ENCODE measurements at regions of chr5 and their contacts with region 1.

Region 1: DNA sequence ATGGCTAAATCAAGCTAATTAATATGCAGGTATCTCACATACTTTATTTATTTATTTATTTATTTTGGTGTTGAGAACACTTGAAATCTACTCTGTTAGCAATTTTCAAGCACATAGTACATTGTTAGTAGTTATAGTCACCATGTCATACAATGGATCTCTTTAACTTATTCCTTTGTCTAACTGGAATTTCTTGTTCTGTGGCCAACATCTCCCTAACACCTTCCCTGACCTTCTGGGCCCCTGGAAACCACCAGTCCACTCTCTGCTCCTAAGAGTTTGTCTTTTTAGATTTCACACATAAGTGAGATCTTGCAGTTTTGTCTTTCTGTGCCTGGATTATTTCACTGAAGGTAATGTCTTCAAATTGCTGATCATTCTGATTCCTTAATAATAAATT is 229.1 kb downstream of the SEMA5A start:
- DNase-seq: peak in 1 of 2 experiments; percentile 34
- H3K4me3 ChIP-seq: no peak overlapping the region
- H3K4me3 Mint-ChIP-seq: no peak overlapping the region
- H3K27ac Mint-ChIP-seq: peak overlapping the region; percentile 6
- H3K4me1 ChIP-seq: peaks cover 10% of the 10 kb centered on the region; the same call in 1 of the 2 replicates
- H3K4me1 Mint-ChIP-seq: peaks cover 15% of the 10 kb centered on the region
- H3K27me3 ChIP-seq: no peaks in the 10 kb centered on the region
- H3K27me3 Mint-ChIP-seq: no peaks in the 10 kb centered on the region
- CTCF ChIP-seq: no peak

Region 2: DNA sequence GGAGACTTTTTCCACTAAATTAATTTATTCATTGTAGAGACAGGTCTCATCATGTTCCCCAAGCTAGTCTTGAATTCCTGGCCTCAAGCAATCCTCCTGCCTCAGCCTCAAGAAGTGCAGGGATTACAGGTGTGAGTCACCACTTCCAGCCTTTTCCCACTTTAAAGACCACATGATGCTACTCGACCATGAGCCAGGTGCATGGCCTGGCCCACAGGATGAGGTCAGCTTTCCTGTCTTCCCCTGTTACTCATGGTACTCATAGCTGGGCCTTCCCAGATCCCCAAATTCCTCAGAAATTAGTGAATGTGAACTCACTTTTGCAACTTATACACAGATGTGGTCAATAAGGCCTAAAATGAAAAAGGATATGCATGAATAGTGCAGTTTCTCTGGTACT is 166.7 kb before region 1 on chr5:
- CTCF ChIA-PET with region 1: no interaction called
- POLR2A ChIA-PET with region 1: no interaction called
- intact Hi-C with region 1: no loop called
- DNase-seq: no peak
- H3K4me3 ChIP-seq: no peak overlapping the region
- H3K4me3 Mint-ChIP-seq: no peak overlapping the region
- H3K27ac Mint-ChIP-seq: no peak overlapping the region
- H3K4me1 ChIP-seq: no peaks in the 10 kb centered on the region
- H3K4me1 Mint-ChIP-seq: no peaks in the 10 kb centered on the region
- H3K27me3 ChIP-seq: no peaks in the 10 kb centered on the region
- H3K27me3 Mint-ChIP-seq: no peaks in the 10 kb centered on the region
- CTCF ChIP-seq: no peak

Region 3: GRCh38 chr5:9269014-9269413 is 47.7 kb before region 1 on chr5:
- CTCF ChIA-PET with region 1: no interaction called
- POLR2A ChIA-PET with region 1: no interaction called
- intact Hi-C with region 1: no loop called
- DNase-seq: no peak
- H3K4me3 ChIP-seq: no peak overlapping the region
- H3K4me3 Mint-ChIP-seq: no peak overlapping the region
- H3K27ac Mint-ChIP-seq: no peak overlapping the region
- H3K4me1 ChIP-seq: peaks cover 4% of the 10 kb centered on the region; the same call in 1 of the 2 replicates
- H3K4me1 Mint-ChIP-seq: peaks cover 8% of the 10 kb centered on the region
- H3K27me3 ChIP-seq: no peaks in the 10 kb centered on the region
- H3K27me3 Mint-ChIP-seq: no peaks in the 10 kb centered on the region
- CTCF ChIP-seq: no peak

Region 4: GRCh38 chr5:9348401-9348996 is 31.8 kb after region 1 on chr5:
- CTCF ChIA-PET with region 1: no interaction called
- POLR2A ChIA-PET with region 1: no interaction called
- intact Hi-C with region 1: loop called (anchors 2 kb)
- DNase-seq: peak; percentile 49 to 58
- H3K4me3 ChIP-seq: no peak overlapping the region
- H3K4me3 Mint-ChIP-seq: peak overlapping the region; percentile 42
- H3K27ac Mint-ChIP-seq: peak overlapping the region; percentile 73
- H3K4me1 ChIP-seq: peaks cover 35% of the 10 kb centered on the region
- H3K4me1 Mint-ChIP-seq: peaks cover 14% of the 10 kb centered on the region
- H3K27me3 ChIP-seq: no peaks in the 10 kb centered on the region
- H3K27me3 Mint-ChIP-seq: no peaks in the 10 kb centered on the region
- CTCF ChIP-seq: no peak